Activated CD8-positive, alpha-beta memory T cell treated with anti-CD3 and anti-CD28 coated beads, Interleukin-2, amount 10 ng/mL, durations not matched to agents 7 days and 5 days (primary cell): ENCODE measurements at regions of chr2 and their contacts with region 1.

Region 1: GRCh38 chr2:175282290-175282689 is 100.8 kb upstream of the ATP5MC3 start:
- DNase-seq: no peak
- ATAC-seq: peak; percentile 73
- H3K4me3 Mint-ChIP-seq: no peak overlapping the region
- H3K27ac Mint-ChIP-seq: no peak overlapping the region
- H3K4me1 Mint-ChIP-seq: peaks cover 3% of the 10 kb centered on the region
- H3K27me3 Mint-ChIP-seq: peaks cover 17% of the 10 kb centered on the region

Region 2: DNA sequence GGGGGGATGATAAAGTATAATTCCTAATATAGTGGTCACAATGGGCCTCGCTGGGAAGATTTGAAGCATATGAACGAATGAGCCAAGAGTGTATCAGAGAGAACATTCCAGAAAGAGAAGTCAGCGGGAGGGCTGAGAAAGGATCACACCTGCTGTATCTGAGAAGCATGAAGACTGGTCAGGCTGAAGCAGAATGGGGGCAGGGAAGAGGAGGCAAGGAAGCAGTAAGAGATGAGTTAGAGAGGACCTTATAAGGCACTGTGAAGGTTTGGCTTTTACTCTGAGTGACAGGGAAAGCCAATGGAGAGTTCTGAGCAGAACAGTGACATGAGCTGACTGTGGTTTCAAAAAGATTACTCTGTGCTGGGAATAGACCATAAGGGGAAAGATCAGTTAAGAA is 350.6 kb before region 1 on chr2:
- CTCF ChIA-PET with region 1: no interaction called
- DNase-seq: no peak
- ATAC-seq: no peak
- H3K4me3 Mint-ChIP-seq: no peak overlapping the region
- H3K27ac Mint-ChIP-seq: no peak overlapping the region
- H3K4me1 Mint-ChIP-seq: no peaks in the 10 kb centered on the region
- H3K27me3 Mint-ChIP-seq: no peaks in the 10 kb centered on the region

Region 3: DNA sequence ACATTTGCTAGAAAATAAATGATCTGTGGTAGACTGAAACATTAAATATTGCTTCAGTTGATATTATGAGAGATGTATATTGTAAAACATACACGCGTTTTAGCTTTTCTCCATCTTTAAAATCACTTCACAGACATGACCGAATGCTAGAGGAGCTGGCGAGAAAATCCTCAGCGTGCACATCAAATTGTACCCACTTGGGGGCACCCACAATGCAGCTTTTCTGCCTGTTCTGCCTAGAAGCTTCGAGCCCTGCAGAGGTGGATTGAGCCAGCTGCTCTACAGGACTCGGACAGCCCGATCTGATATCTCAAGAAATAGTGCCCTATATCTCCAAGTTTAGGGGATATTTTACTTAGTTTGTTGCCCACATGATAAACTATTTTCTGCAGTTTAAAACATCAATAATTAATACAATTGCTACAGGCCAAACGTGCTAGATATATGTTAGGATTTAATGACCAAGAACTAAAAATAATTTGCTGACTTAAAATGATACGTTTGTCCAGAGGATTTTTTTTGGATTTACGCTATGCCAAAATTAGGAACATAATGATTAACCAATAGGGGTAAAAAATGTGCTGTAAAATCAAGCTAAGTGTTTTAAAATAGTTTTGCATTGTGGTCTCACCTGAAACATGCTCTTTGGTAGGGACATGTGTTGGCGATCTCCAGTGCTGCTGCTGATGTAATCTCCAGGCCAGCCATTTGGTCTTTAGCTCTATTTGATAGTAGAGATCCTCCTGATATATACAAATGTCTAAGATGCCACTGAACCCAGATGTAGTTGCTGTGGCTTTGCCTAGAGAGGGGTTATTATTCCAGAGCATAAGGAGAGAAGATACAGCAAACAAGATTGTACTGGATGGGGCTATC is 78.4 kb before region 1 on chr2:
- CTCF ChIA-PET with region 1: interaction called, 47 read pairs
- DNase-seq: peak; percentile 71
- ATAC-seq: peak; percentile 89
- H3K4me3 Mint-ChIP-seq: no peak overlapping the region
- H3K27ac Mint-ChIP-seq: no peak overlapping the region
- H3K4me1 Mint-ChIP-seq: peaks cover 2% of the 10 kb centered on the region
- H3K27me3 Mint-ChIP-seq: peaks cover 16% of the 10 kb centered on the region

Region 4: GRCh38 chr2:175251425-175252041 is 30.8 kb before region 1 on chr2:
- CTCF ChIA-PET with region 1: interaction called, 23 read pairs
- DNase-seq: no peak
- ATAC-seq: no peak
- H3K4me3 Mint-ChIP-seq: no peak overlapping the region
- H3K27ac Mint-ChIP-seq: no peak overlapping the region
- H3K4me1 Mint-ChIP-seq: no peaks in the 10 kb centered on the region
- H3K27me3 Mint-ChIP-seq: peaks cover 32% of the 10 kb centered on the region

Region 5: GRCh38 chr2:175350105-175350504 is 67.8 kb after region 1 on chr2:
- CTCF ChIA-PET with region 1: no interaction called
- DNase-seq: no peak
- ATAC-seq: no peak
- H3K4me3 Mint-ChIP-seq: no peak overlapping the region
- H3K27ac Mint-ChIP-seq: no peak overlapping the region
- H3K4me1 Mint-ChIP-seq: peaks cover 3% of the 10 kb centered on the region
- H3K27me3 Mint-ChIP-seq: peaks cover 39% of the 10 kb centered on the region